ENCODE measurements at regions of chr2 and their contacts with region 1.

Region 1: DNA sequence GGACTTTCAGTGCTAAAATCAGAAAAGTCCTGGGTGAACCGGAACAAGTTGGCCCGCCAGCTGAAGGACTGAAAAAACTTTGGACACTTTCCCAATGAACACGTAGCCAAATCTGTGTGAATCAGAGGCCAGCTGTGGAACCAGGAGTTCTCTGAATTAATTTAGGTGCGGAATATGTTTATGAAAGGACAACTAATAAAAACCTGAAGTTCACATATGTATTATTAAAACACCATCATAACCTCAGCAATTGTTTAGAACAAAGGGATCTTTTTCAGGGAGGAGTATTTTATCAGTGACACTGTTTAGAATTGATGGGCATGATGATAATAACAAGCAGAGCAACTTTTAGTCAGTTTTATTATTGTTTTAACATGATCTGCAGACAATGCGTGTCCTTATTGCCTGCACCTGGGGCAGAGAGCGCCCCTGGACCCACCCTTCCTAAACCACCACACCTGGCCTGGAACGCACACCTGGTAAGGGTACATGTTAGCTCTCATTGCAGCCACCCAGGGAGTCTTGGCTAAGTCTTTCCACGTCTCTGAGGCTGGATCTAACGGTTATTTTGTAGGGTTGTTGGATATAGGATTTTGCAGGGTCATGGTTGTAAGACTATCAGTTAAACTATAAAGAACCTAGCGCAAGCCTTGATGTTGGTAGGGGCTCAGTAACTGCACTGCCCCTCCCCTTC is 9.9 kb upstream of the ODC1 start:
- DNase-seq: no peak
- ATAC-seq: peak in 2 of 4 donors; percentile 47 to 67
- H3K4me3 ChIP-seq: no peak overlapping the region
- H3K27ac ChIP-seq: no peak overlapping the region
- H3K4me1 ChIP-seq: peaks cover 15% of the 10 kb centered on the region
- H3K27me3 ChIP-seq: no peaks in the 10 kb centered on the region
- CTCF ChIP-seq: no peak

Region 2: DNA sequence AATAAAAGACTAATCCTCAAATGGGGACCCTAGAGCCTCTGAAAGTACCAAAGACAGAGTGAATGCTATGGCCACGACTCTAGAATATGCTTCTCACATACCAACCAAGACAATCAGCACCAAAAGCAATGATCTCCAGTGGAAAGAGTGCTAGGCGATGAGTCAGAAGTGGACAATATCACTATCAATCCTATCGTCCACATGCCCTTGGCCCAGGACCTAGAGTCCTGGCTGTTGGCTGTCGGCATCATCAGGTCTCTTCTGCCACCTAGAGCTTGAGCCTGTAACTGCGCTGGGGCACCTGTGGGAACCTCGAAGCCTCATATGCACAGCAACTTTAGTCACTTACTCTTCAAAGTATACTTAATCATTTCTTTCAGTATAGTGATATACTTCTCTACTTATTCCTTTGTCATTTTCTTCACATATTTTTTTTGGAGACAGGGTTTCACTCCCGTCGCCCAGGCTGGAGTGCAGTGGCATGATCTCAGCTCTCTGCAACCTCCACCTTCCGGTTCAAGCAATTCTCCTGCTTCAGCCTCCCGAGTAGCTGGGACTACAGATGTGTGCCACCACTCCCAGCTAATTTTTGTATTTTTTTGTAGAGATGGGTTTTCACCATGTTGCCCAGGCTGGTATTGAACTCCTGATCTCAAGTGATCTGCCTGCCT is 202.0 kb after region 1 on chr2:
- intact Hi-C with region 1: loop called (anchors 5 to 10 kb)
- DNase-seq: peak; percentile 55 to 64
- ATAC-seq: peak; percentile 87 to 97 (median 95)
- H3K4me3 ChIP-seq: no peak overlapping the region
- H3K27ac ChIP-seq: no peak overlapping the region
- H3K4me1 ChIP-seq: no peaks in the 10 kb centered on the region
- H3K27me3 ChIP-seq: no peaks in the 10 kb centered on the region
- CTCF ChIP-seq: peak; percentile 73

Measured in psoas muscle (tissue), 8 donors.